ENCODE measurements at regions of chrX and their contacts with region 1.

Region 1: DNA sequence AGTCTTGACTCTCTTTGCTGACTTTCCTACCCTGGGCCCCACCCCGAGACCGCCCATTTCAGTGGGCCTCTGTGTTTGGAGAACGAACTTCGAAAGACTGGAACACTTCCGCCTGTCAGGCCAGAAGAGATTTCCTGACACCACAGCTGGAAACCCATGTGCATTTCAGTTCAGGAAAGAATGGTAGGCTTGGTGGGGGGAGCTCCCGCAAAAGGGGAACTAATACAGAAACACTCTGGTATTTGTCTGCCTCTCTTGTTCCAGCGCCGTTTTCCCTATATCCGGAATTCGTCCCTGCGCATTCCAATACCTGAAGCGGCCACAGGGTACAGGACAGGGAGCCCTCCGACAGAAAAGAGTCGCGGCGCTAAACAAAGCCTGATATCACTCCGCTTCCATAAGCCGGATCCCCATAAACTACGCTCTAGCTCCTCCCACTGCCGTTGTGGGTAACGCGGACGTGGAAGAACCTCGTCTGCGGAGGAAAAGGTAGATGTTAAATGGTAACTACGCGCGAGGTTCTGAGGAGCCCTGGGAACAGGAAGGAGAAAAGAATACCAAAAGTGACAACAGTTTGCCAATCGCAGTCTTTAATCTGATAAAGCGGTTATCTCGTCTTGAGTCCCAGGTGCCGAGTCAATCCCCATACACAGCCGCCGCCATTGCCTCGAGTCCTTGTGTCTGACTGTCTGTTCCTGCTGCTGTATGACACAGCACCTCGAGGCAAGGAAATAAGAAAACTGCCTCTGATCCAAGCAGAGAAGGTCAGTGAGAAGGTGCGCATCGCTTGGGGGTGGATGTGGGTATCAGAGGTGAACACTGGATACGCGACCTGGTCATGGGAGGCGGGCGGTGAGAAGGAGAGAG is at the start of gene ARMCX5:
- DNase-seq: peak; percentile 39 to 88 (median 66)
- ATAC-seq: peak; percentile 89
- H3K4me3 ChIP-seq: peak within 1 kb of the TSS; percentile 72 to 85
- H3K4me3 Mint-ChIP-seq: peak within 1 kb of the TSS; percentile 99
- H3K27ac ChIP-seq: peak within 1 kb of the TSS; percentile 80 to 84
- H3K27ac Mint-ChIP-seq: peak within 1 kb of the TSS; percentile 99
- H3K4me1 ChIP-seq: peaks cover 5% of the 10 kb centered on the region
- H3K4me1 Mint-ChIP-seq: peaks cover 43% of the 10 kb centered on the region
- H3K27me3 ChIP-seq: no peaks in the 10 kb centered on the region
- H3K27me3 Mint-ChIP-seq: no peaks in the 10 kb centered on the region
- CTCF ChIP-seq: no peak
- total RNA-seq, gene ARMCX5: 13.3 to 14.7 TPM

Region 2: DNA sequence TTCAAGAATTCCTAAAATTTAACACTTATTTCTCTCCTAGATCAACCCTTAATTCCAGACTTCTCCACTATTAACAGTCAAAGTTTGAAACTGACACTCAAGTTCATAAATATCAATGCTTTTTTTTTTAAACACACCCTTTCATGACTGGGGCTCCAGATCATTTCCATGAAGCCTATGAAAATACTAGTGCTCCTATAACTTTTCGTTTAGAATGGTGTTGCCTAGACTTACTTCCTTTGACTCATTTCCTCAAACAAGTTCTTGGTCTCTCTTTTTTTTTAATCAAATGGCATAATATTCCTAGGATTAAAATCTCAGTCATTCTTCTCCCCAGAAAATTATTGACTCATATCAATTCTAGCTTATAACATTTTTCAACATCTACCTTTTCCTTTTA is 680.6 kb before region 1 on chrX:
- CTCF ChIA-PET with region 1: no interaction called
- POLR2A ChIA-PET with region 1: no interaction called
- intact Hi-C with region 1: no loop called
- DNase-seq: no peak
- ATAC-seq: no peak
- H3K4me3 ChIP-seq: no peak overlapping the region
- H3K4me3 Mint-ChIP-seq: no peak overlapping the region
- H3K27ac ChIP-seq: no peak overlapping the region
- H3K27ac Mint-ChIP-seq: no peak overlapping the region
- H3K4me1 ChIP-seq: no peaks in the 10 kb centered on the region
- H3K4me1 Mint-ChIP-seq: peaks cover 8% of the 10 kb centered on the region
- H3K27me3 ChIP-seq: no peaks in the 10 kb centered on the region
- H3K27me3 Mint-ChIP-seq: no peaks in the 10 kb centered on the region
- CTCF ChIP-seq: no peak

Region 3: GRCh38 chrX:102652031-102652688 is 52.8 kb after region 1 on chrX:
- CTCF ChIA-PET with region 1: no interaction called
- POLR2A ChIA-PET with region 1: interaction called, 9 read pairs
- intact Hi-C with region 1: loop called (anchors 1 to 2 kb)
- DNase-seq: peak; percentile 26 to 83 (median 62)
- ATAC-seq: peak; percentile 78
- H3K4me3 ChIP-seq: peak overlapping the region; percentile 73 to 78
- H3K4me3 Mint-ChIP-seq: peak overlapping the region; percentile 99
- H3K27ac ChIP-seq: peak overlapping the region; percentile 70 to 78
- H3K27ac Mint-ChIP-seq: peak overlapping the region; percentile 95
- H3K4me1 ChIP-seq: peaks cover 13% of the 10 kb centered on the region
- H3K4me1 Mint-ChIP-seq: peaks cover 42% of the 10 kb centered on the region
- H3K27me3 ChIP-seq: no peaks in the 10 kb centered on the region
- H3K27me3 Mint-ChIP-seq: no peaks in the 10 kb centered on the region
- CTCF ChIP-seq: peak; percentile 49

Region 4: GRCh38 chrX:102720237-102721168 is 121.2 kb after region 1 on chrX and contains the start of gene GPRASP3:
- CTCF ChIA-PET with region 1: no interaction called
- POLR2A ChIA-PET with region 1: no interaction called
- intact Hi-C with region 1: loop called (anchors 5 to 10 kb)
- DNase-seq: peak; percentile 24 to 79 (median 68)
- ATAC-seq: peak; percentile 97
- H3K4me3 ChIP-seq: peak within 1 kb of the TSS; percentile 45 to 62
- H3K4me3 Mint-ChIP-seq: peak within 1 kb of the TSS; percentile 92
- H3K27ac ChIP-seq: peak within 1 kb of the TSS; percentile 4 to 19
- H3K27ac Mint-ChIP-seq: peak within 1 kb of the TSS; percentile 90
- H3K4me1 ChIP-seq: peaks cover 6% of the 10 kb centered on the region
- H3K4me1 Mint-ChIP-seq: peaks cover 20% of the 10 kb centered on the region
- H3K27me3 ChIP-seq: no peaks in the 10 kb centered on the region
- H3K27me3 Mint-ChIP-seq: no peaks in the 10 kb centered on the region
- CTCF ChIP-seq: no peak
- total RNA-seq, gene GPRASP3: 0.94 to 0.95 TPM

Region 5: DNA sequence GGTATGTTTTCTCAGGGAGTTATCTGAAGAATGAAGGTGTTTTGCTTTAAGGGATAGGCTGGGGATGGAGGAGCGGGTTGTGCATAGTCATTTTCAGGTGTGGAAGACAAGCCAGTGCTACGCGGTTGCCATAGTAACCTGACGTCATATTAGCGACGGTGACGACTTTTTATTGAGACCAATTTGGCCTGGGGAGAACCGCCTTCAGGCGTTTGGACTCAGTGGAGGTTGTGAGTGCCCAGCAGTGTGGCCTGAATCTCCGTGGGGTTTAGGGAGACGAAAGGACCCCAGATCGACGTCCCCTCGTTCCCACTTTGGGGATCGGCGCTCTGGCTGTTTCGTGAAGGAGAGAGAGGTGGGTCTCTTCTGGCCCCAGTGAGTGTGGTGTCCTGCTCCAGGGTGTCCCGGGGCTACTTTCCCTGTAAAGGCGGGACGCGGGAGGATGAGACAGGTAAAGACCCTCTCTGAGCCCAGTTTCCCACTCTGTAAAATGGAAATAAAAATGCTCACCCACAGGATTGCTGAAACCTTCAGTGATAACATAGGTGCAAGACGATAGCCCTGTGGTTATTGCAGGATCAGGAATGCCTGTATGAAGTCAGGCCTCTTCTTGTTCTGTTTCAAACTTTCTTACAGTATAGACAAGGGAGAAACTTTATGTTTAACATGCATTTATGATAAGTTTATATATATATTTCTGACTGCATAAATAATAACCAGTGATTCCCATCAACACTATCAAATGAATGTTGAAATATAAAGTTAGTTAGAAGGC is 169.9 kb after region 1 on chrX:
- CTCF ChIA-PET with region 1: no interaction called
- POLR2A ChIA-PET with region 1: no interaction called
- intact Hi-C with region 1: loop called in 1 of 2 experiments (anchors 2 kb)
- DNase-seq: peak; percentile 57 to 90 (median 79)
- ATAC-seq: peak; percentile 83
- H3K4me3 ChIP-seq: peak overlapping the region; percentile 74 to 92
- H3K4me3 Mint-ChIP-seq: peak overlapping the region; percentile 98
- H3K27ac ChIP-seq: peak overlapping the region; percentile 59 to 83
- H3K27ac Mint-ChIP-seq: peak overlapping the region; percentile 97
- H3K4me1 ChIP-seq: no peaks in the 10 kb centered on the region
- H3K4me1 Mint-ChIP-seq: peaks cover 17% of the 10 kb centered on the region
- H3K27me3 ChIP-seq: no peaks in the 10 kb centered on the region
- H3K27me3 Mint-ChIP-seq: no peaks in the 10 kb centered on the region
- CTCF ChIP-seq: no peak

Measured in CD8-positive, alpha-beta T cell (primary cell).